ENCODE measurements at regions of chr10 and their contacts with region 1.

Region 1: DNA sequence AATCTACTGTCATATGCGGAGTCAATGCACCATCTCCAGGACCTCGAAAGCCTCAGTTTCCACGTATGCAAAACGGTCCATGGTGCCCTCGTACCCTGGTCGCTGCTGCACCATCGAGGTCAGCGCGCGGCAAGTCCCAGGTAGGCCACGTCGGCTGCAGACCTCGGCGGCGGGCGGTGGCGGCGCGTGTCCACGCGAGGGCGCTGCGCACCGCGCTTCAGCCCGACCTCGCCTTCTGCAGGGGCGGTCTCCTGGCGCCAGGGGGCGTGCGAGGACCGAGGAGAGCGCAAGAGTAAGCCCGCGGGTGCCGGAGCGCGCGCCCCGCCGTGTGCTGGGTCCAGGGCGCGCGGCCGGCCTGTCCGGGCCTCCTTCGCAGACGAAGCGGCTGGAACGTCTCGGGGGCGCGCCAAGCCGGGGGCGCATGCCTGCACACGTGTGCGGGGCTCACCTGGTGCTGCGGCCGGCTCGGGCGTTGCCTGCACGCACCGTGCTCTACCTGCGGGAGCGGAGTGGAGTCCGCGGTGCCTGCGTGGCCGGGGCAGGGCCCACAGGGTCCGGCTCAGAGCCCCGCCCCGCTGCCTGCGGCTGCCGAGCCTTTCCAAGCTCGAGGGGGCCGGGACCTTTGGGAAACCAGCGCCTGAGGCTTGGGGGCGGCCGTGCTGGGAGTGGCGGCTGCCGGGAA is 54.0 kb downstream of the GLRX3 start:
- DNase-seq: peak; percentile 71 to 89 (median 83)
- H3K4me3 ChIP-seq: peak overlapping the region; percentile 39 to 78 (median 68)
- H3K27ac ChIP-seq: peak overlapping the region in 26 of 59 donors; percentile 3 to 83 (median 63)
- H3K27me3 ChIP-seq: no peaks in the 10 kb centered on the region
- CTCF ChIP-seq: peak; percentile 92 to 100 (median 100)

Region 2: DNA sequence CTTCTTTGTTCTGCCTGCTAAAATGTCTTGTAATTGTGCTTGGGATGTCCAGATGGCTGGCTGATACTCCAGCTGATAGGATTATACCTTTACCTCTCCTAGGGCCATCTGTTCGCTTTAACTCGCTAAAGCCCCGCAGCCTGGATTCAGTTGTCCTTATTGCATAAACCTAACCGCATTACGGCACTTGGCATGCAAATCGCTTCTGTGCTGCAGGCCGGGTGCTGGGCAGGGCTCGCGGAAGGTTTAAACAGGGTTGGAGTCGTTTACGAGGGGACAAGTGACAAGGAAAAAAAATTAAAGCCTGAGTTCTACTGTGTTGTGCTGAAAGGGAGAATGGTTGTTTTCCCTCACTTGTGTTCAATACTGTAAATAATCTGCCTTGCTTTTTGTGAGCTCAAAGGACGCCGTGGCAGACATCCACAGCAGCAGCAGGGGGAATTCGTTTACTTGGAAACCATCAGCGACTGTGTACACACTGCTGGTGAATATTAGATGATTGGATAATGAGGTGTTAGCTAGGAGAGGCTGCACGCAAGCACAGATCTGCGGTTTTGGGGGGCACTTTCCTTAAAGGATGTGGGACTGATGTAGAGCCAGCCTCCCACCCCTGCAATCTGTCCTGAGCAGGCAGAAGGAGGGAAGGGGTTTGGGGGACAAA is 319.1 kb before region 1 on chr10:
- intact Hi-C with region 1: no loop called
- DNase-seq: peak in 1 of 10 donors; percentile 85
- H3K4me3 ChIP-seq: no peak overlapping the region
- H3K27ac ChIP-seq: peak overlapping the region in 1 of 59 donors; percentile 72
- H3K27me3 ChIP-seq: peaks cover 0 to 42% (median 8%) of the 10 kb centered on the region in 45 donors
- CTCF ChIP-seq: no peak

Region 3: DNA sequence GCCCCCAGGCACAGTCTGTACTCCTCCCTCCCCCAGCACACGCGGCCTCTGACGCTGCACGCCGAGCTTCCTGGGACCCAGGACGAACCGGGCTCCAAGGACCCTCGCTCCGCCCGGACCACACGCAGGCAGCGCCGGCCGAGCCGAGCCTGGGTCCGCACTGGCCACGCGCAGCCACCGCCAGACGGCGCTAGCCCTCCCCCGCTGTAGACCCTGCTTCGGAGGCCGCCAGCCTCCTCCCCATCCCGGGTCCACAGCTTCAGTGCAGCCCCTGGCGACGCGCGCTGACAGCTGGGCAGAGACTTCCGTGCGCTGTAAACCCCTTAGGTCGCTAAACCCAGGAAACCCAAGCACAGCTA is 1122.3 kb after region 1 on chr10:
- intact Hi-C with region 1: loop called in 1 of 2 experiments (anchors 5 kb)
- DNase-seq: peak in 1 of 10 donors; percentile 59
- H3K4me3 ChIP-seq: peak overlapping the region in 56 of 59 donors; percentile 21 to 67 (median 46)
- H3K27ac ChIP-seq: peak overlapping the region in 19 of 59 donors; percentile 4 to 70 (median 37)
- H3K27me3 ChIP-seq: peaks cover 0 to 69% (median 44%) of the 10 kb centered on the region in 45 donors
- CTCF ChIP-seq: peak in 50 of 56 donors; percentile 21 to 62 (median 49)

Region 4: DNA sequence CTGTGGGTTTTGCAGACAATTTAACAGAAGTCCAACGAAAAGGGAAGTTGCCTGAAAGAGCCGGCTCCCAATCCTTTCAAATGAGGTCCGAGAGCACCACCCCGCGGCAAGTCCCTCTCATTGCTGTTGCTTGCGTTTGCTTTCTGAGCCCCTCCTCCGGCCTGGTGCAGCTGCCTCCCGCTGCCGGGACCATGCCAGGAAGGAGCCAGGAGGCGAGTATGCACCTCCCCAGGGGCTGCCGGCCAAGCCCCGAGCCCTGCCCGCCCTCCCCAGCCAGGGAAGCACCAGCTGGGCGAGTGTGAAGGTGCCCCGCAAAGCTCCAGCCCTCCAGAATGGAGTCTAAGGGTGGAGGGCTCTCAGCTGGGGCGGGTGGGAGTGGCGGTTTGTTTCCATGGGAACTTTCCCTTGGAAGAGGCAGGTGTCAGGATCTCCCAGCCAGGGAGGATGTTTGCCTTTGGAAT is 1684.8 kb after region 1 on chr10:
- intact Hi-C with region 1: loop called (anchors 1 to 5 kb)
- DNase-seq: peak; percentile 64 to 89 (median 83)
- H3K4me3 ChIP-seq: peak overlapping the region in 30 of 59 donors; percentile 13 to 49 (median 34)
- H3K27ac ChIP-seq: no peak overlapping the region
- H3K27me3 ChIP-seq: peaks cover 0 to 20% (median 0%) of the 10 kb centered on the region in 45 donors
- CTCF ChIP-seq: peak; percentile 34 to 92 (median 79)